ENCODE measurements at regions of chr3 and their contacts with region 1.

Region 1: GRCh38 chr3:16272588-16272987 is 7.6 kb downstream of the OXNAD1 start:
- DNase-seq: no peak
- H3K4me3 ChIP-seq: no peak overlapping the region
- H3K27ac ChIP-seq: no peak overlapping the region
- H3K27me3 ChIP-seq: no peaks in the 10 kb centered on the region
- CTCF ChIP-seq: no peak

Region 2: GRCh38 chr3:16871915-16872842 is 599.6 kb after region 1 on chr3:
- CTCF ChIA-PET with region 1: interaction called, 10 read pairs
- POLR2A ChIA-PET with region 1: no interaction called
- DNase-seq: no peak
- H3K4me3 ChIP-seq: no peak overlapping the region
- H3K27ac ChIP-seq: no peak overlapping the region
- H3K27me3 ChIP-seq: no peaks in the 10 kb centered on the region
- CTCF ChIP-seq: no peak

Measured in AG04450 (cell line).